Activated CD4-positive, alpha-beta memory T cell treated with anti-CD3 and anti-CD28 coated beads, Interleukin-2, amount 10 ng/mL, durations not matched to agents 7 days and 5 days (primary cell): ENCODE measurements at regions of chr3 and their contacts with region 1.

Region 1: GRCh38 chr3:183635431-183636220 is at the start of gene KLHL24:
- DNase-seq: peak; percentile 93
- H3K4me3 Mint-ChIP-seq: peak within 1 kb of the TSS; percentile 90
- H3K27ac Mint-ChIP-seq: peak within 1 kb of the TSS; percentile 90
- H3K4me1 Mint-ChIP-seq: peaks cover 27% of the 10 kb centered on the region
- H3K27me3 Mint-ChIP-seq: no peaks in the 10 kb centered on the region
- total RNA-seq, gene KLHL24: 28.9 to 31.2 TPM

Region 2: GRCh38 chr3:183555541-183556081 is 80.0 kb before region 1 on chr3 and contains the start of gene KLHL6:
- CTCF ChIA-PET with region 1: interaction called, 6 read pairs
- POLR2A ChIA-PET with region 1: interaction called, 34 read pairs
- DNase-seq: peak; percentile 81
- H3K4me3 Mint-ChIP-seq: peak within 1 kb of the TSS; percentile 100
- H3K27ac Mint-ChIP-seq: peak within 1 kb of the TSS; percentile 98
- H3K4me1 Mint-ChIP-seq: peaks cover 51% of the 10 kb centered on the region
- H3K27me3 Mint-ChIP-seq: no peaks in the 10 kb centered on the region
- total RNA-seq, gene KLHL6: 47.1 to 48.6 TPM

Region 3: GRCh38 chr3:183584246-183584913 is 51.2 kb before region 1 on chr3:
- CTCF ChIA-PET with region 1: interaction called, 3 read pairs
- POLR2A ChIA-PET with region 1: interaction called, 33 read pairs
- DNase-seq: no peak
- H3K4me3 Mint-ChIP-seq: no peak overlapping the region
- H3K27ac Mint-ChIP-seq: no peak overlapping the region
- H3K4me1 Mint-ChIP-seq: peaks cover 43% of the 10 kb centered on the region
- H3K27me3 Mint-ChIP-seq: no peaks in the 10 kb centered on the region

Region 4: DNA sequence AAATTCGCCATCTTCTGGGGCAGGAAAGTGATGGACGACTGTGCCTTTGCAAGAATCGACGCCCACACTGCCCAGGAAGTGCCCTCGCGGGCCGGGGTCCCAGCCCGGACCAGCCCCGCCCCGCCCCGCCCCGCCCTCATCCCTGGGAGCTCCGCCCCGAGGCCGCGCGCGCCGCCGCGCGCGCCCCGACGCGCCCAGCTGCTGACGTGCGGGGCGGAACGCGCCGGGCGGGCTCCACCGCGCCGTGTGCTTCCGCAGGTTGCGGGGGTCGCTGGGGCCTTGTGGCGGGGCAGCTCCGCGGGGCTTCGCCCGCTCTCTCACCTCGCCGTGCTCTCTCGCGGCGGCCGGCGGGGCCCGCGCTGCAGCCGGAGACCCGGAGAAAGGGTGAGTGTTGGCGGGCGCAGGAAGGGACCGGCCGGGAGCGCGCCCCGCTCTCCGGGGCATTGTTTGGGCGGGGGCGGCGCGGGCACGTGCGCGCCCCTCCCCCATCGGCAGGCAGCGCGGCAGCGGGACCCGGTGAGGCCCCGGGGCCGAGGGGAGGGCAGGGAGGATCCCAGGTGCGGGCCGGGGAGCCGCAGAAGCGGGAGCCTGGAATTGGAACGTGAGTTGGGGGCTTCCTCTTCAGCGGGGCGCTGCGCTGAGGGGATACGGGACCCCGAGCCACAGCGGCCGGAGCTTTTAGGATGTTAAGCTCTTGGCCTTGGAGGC is 62.1 kb after region 1 on chr3 and contains the start of gene YEATS2:
- CTCF ChIA-PET with region 1: interaction called, 7 read pairs
- POLR2A ChIA-PET with region 1: interaction called, 85 read pairs
- DNase-seq: peak; percentile 77
- H3K4me3 Mint-ChIP-seq: peak within 1 kb of the TSS; percentile 82
- H3K27ac Mint-ChIP-seq: peak within 1 kb of the TSS; percentile 72
- H3K4me1 Mint-ChIP-seq: peaks cover 36% of the 10 kb centered on the region
- H3K27me3 Mint-ChIP-seq: no peaks in the 10 kb centered on the region
- total RNA-seq, gene YEATS2: 51.7 to 56.5 TPM

Region 5: DNA sequence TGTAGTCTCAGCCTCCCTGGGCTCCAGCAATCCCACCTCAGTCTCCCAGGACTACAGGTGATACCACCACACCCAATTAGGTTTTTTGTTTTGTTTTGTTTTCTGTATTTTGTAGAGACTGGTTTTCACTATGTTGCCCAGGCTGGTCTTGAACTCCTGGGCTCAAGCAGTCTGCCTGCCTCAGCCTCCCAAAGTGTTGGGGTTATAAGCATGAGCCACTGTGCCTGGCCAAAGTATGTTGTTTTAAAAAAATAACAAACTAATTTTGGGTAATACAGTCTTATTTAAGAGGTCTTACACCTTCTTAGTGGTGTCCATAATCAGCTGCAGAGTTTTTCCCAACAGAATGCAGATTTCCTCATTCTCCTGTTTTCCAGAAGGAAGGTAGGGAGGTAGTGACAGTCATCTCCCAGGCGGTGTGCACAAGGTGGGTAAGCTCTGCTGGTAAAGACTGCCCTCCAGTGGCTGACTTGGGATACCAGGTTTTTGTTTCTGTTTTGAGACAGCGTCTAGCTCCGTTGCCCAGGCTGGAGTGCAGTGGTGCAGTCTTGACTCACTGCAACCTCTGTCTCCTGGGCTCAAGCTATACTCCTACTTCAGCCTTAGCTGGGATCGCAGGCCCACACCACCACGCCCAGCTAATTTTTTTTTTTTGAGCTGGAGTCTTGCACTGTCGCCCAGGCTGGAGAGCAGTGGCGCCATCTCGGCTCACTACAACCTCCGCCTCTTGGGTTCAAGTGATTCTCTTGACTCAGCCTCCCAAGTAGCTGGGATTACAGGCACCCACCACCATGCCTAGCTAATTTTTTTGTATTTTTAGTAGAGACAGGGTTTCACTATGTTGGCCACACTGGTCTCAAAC is 131.3 kb after region 1 on chr3:
- CTCF ChIA-PET with region 1: interaction called, 12 read pairs
- POLR2A ChIA-PET with region 1: no interaction called
- DNase-seq: peak; percentile 79
- H3K4me3 Mint-ChIP-seq: no peak overlapping the region
- H3K27ac Mint-ChIP-seq: no peak overlapping the region
- H3K4me1 Mint-ChIP-seq: peaks cover 20% of the 10 kb centered on the region
- H3K27me3 Mint-ChIP-seq: no peaks in the 10 kb centered on the region